ENCODE measurements at regions of chr5 and their contacts with region 1.

Region 1: GRCh38 chr5:57650360-57651069 is 167.9 kb upstream of the ACTBL2 start:
- DNase-seq: peak; percentile 19
- H3K4me3 Mint-ChIP-seq: no peak overlapping the region
- H3K27ac Mint-ChIP-seq: no peak overlapping the region
- H3K4me1 Mint-ChIP-seq: no peaks in the 10 kb centered on the region
- H3K27me3 Mint-ChIP-seq: peaks cover 9% of the 10 kb centered on the region

Region 2: GRCh38 chr5:57668381-57668780 is 17.9 kb after region 1 on chr5:
- CTCF ChIA-PET with region 1: interaction called, 10 read pairs
- intact Hi-C with region 1: no loop called
- DNase-seq: no peak
- H3K4me3 Mint-ChIP-seq: no peak overlapping the region
- H3K27ac Mint-ChIP-seq: no peak overlapping the region
- H3K4me1 Mint-ChIP-seq: no peaks in the 10 kb centered on the region
- H3K27me3 Mint-ChIP-seq: peaks cover 13% of the 10 kb centered on the region

Region 3: DNA sequence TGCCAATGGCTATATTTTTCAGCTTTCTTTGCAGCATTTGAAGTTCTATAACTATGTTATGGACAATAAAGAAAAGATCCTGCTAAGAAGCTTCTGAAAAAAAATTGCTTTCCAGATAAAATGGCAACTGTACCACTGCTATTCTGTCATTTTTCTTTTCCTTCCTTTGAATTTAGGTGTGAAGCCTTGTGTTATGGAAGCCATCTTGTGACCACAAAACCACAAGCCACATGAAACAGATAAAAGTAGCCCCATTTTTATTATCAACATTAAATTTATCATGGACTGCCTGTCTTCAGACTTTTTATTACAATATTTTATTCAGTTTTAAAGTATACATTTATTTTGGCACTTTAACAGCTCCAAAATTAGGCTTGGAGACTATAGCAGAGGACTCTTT is 122.0 kb after region 1 on chr5:
- CTCF ChIA-PET with region 1: interaction called, 3 read pairs
- intact Hi-C with region 1: loop called (anchors 5 kb)
- DNase-seq: no peak
- H3K4me3 Mint-ChIP-seq: no peak overlapping the region
- H3K27ac Mint-ChIP-seq: no peak overlapping the region
- H3K4me1 Mint-ChIP-seq: peaks cover 1% of the 10 kb centered on the region
- H3K27me3 Mint-ChIP-seq: peaks cover 10% of the 10 kb centered on the region

Region 4: DNA sequence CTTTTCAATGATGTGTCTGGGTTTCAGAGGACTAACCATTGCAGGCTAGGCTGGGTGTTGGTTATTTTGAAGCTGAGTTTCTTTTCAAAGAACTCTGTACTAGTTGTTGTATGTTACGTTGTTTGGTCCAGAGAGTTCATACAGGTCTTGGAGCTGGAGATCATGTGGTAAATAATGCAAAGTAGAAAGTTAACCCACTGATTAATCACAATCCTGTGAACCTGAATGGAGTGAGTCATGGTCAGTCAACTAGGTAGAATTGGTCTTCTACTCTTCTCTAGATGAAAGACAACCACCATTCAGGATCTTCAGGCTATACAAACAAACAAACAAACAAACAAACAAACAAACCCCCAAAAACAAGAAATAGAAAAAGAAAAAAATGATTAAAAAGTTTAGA is 221.0 kb after region 1 on chr5:
- CTCF ChIA-PET with region 1: no interaction called
- intact Hi-C with region 1: no loop called
- DNase-seq: no peak
- H3K4me3 Mint-ChIP-seq: no peak overlapping the region
- H3K27ac Mint-ChIP-seq: no peak overlapping the region
- H3K4me1 Mint-ChIP-seq: no peaks in the 10 kb centered on the region
- H3K27me3 Mint-ChIP-seq: peaks cover 5% of the 10 kb centered on the region